ENCODE measurements at regions of chr18 and their contacts with region 1.

Region 1: DNA sequence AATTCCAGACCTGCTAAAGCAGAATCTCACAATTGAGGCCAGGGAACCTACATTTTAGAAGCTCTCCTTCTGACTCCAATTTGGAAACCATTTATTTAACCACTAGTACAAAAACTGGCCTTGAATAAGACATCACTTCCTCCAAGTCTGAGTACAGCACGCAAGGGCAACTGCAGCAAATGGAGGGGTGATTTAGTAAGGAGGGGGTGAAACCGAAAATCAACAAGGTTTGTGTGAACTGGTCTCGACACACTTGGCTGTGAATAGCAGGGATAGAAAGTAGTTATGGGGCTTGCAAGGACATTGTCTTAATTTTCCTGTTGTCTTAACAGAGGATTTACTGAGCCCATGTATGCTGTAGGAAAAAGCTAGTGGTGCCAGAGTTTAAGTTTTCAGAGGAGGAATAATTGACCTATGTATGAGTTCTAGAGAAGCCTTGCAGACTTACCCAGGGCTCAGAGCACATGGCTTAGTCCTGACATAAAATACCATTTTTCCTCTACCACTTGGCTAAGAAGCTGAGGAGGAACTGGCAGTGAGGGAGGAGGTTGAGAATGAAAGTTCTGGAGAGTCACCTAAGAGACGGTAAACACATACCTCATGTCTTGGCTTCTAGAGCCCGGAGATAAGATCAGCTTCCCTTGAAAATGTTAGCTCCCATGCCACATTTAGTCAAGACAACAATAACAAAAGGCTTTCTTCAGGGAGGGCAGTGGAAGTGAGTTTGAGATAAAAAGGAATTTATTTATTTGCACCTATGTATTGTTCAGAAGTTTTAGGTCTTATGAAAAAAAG is 114.8 kb downstream of the SMAD2 start:
- DNase-seq: no peak
- ATAC-seq: no peak
- H3K4me3 ChIP-seq: no peak overlapping the region
- H3K4me3 Mint-ChIP-seq: no peak overlapping the region
- H3K27ac ChIP-seq: no peak overlapping the region
- H3K27ac Mint-ChIP-seq: no peak overlapping the region
- H3K4me1 ChIP-seq: no peaks in the 10 kb centered on the region
- H3K4me1 Mint-ChIP-seq: no peaks in the 10 kb centered on the region
- H3K27me3 ChIP-seq: no peaks in the 10 kb centered on the region
- H3K27me3 Mint-ChIP-seq: no peaks in the 10 kb centered on the region

Region 2: DNA sequence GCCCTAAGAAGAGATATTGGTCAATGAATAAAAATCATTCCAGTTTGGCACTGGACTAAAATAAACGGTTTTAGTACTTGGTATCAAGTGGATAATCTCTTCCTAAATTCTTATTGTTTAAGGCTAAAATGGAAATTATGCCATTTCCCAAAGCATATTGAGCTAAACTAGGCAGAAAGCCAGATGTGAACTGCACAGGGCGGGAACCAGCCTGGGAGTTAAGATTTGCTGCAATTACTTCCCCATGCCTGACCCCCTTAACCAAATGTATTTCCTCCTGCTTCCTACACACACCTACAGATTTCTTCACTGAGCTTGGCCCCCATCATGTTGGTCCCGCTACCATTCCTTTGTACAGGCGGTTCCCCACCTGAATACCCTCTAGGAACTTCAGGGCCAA is 581.3 kb after region 1 on chr18:
- CTCF ChIA-PET with region 1: no interaction called
- POLR2A ChIA-PET with region 1: interaction called in 1 of 2 experiments, 10 read pairs
- DNase-seq: no peak
- ATAC-seq: no peak
- H3K4me3 ChIP-seq: no peak overlapping the region
- H3K4me3 Mint-ChIP-seq: no peak overlapping the region
- H3K27ac ChIP-seq: no peak overlapping the region
- H3K27ac Mint-ChIP-seq: no peak overlapping the region
- H3K4me1 ChIP-seq: peaks cover 0 to 4% of the 10 kb centered on the region in 2 experiments
- H3K4me1 Mint-ChIP-seq: peaks cover 9 to 11% (median 10%) of the 10 kb centered on the region in 3 donors
- H3K27me3 ChIP-seq: peaks cover 6 to 29% of the 10 kb centered on the region in 2 experiments
- H3K27me3 Mint-ChIP-seq: peaks cover 49 to 56% of the 10 kb centered on the region in 2 donors

Measured in T-cell (primary cell).